B cell (primary cell): ENCODE measurements at regions of chr6 and their contacts with region 1.

Region 1: DNA sequence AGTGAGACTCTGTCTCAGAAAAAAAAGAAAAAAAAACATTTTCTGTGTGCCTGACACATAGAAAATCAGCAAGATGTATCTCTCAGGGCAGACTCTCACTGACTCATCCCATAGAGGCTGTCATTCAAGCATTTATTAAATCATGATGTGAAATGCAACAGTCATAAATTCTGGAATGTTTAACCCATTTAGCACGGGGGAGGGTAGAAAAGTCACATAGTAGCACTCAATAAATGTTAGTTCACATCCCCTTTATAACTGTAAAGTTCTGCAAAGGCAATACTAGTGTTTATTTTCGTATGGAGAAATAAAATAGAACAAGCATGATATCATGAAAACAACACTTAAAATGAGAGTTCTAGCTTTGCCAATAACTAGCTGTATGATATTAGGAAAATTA is 15.5 kb upstream of the CARMIL1 start:
- DNase-seq: no peak
- ATAC-seq: no peak
- H3K4me3 ChIP-seq: no peak overlapping the region
- H3K4me3 Mint-ChIP-seq: no peak overlapping the region
- H3K27ac ChIP-seq: no peak overlapping the region
- H3K27ac Mint-ChIP-seq: no peak overlapping the region
- H3K4me1 ChIP-seq: no peaks in the 10 kb centered on the region
- H3K4me1 Mint-ChIP-seq: peaks cover 2% of the 10 kb centered on the region
- H3K27me3 ChIP-seq: no peaks in the 10 kb centered on the region
- H3K27me3 Mint-ChIP-seq: peaks cover 3% of the 10 kb centered on the region
- CTCF ChIP-seq: no peak

Region 2: DNA sequence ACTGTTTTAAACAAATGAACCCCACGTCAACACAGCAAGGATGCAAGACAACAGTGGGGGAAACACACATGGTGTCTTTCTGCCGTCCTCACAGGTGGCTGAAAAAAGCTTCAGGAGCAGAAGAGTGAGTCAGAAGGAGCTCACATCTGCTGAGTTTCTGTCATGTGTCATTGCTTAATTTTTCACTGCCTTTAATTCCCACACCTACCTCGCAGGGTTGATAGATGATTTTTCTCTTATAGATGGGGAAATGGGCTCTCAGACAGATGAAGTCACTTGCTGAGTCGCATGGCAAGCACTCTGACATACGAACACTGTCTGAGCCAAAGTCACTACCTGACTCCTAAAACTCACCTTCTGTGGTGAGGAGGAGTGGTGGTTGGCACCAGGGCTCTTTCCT is 12.8 kb before region 1 on chr6:
- CTCF ChIA-PET with region 1: interaction called, 11 read pairs
- POLR2A ChIA-PET with region 1: no interaction called
- intact Hi-C with region 1: no loop called
- DNase-seq: no peak
- ATAC-seq: no peak
- H3K4me3 ChIP-seq: no peak overlapping the region
- H3K4me3 Mint-ChIP-seq: no peak overlapping the region
- H3K27ac ChIP-seq: no peak overlapping the region
- H3K27ac Mint-ChIP-seq: no peak overlapping the region
- H3K4me1 ChIP-seq: no peaks in the 10 kb centered on the region
- H3K4me1 Mint-ChIP-seq: no peaks in the 10 kb centered on the region
- H3K27me3 ChIP-seq: peaks cover 0 to 3% (median 1%) of the 10 kb centered on the region in 4 experiments
- H3K27me3 Mint-ChIP-seq: peaks cover 28% of the 10 kb centered on the region
- CTCF ChIP-seq: no peak

Region 3: DNA sequence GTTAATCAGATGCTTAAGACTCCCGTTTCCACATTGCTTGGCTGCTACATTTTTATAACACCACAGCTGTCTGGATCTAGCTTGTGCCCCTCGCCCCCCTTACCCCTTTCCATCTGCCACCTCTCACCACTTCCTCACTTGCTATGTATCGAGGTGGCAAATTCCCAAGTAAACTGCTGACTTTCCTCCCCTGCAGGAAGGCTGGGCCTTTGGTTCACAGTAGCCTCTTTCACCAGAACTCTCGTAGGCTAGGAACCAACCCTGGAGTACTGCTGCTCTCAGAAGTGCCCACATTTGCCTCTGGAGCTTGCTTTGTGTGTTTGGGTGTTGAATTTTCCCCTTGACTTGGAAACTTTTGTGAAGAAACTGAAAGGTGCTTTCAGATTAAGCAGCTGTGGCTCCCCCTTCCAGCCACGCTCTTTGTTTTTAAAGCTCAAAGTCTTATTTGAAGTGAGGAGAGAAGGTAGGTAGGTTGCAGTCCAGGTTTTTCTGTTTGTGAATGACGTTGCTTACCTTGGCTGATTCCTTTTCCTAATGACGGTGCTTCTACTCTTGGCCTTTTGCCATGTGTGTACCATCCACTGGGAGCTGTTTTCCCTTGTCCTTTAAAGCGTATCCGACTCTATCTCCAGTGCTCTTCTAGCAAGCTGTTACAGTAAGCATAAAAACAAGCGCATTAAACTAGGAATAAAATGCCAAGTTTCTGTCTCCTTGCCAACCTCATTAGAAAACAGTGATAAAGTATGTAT is 106.0 kb after region 1 on chr6:
- CTCF ChIA-PET with region 1: interaction called, 10 read pairs
- POLR2A ChIA-PET with region 1: no interaction called
- intact Hi-C with region 1: no loop called
- DNase-seq: no peak
- ATAC-seq: no peak
- H3K4me3 ChIP-seq: no peak overlapping the region
- H3K4me3 Mint-ChIP-seq: peak overlapping the region; percentile 42
- H3K27ac ChIP-seq: peak overlapping the region in 1 of 2 donors; percentile 22
- H3K27ac Mint-ChIP-seq: peak overlapping the region; percentile 43
- H3K4me1 ChIP-seq: peaks cover 19 to 30% of the 10 kb centered on the region in 2 donors
- H3K4me1 Mint-ChIP-seq: peaks cover 62% of the 10 kb centered on the region
- H3K27me3 ChIP-seq: no peaks in the 10 kb centered on the region
- H3K27me3 Mint-ChIP-seq: no peaks in the 10 kb centered on the region
- CTCF ChIP-seq: no peak

Region 4: DNA sequence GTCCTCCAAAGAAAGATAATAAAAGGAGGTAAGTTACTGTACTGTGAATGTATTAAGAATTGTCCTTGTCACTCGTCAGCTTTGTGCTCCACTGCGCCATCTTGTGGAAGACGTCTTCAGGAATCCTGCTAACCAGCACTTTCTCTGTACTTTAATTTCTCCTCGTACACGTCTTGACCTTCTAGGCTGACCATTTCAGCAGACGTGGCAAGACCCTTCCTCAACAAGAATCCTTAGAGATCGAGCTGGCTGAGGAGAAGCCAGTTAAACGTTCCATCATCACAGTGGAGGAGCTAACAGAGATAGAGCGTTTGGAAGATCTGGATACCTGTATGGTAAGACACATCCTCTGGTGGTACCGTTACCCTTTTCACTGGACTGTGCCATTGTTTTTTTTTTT is 292.9 kb after region 1 on chr6:
- CTCF ChIA-PET with region 1: interaction called, 93 read pairs
- POLR2A ChIA-PET with region 1: no interaction called
- intact Hi-C with region 1: loop called (anchors 1 kb)
- DNase-seq: peak; percentile 75
- ATAC-seq: no peak
- H3K4me3 ChIP-seq: no peak overlapping the region
- H3K4me3 Mint-ChIP-seq: no peak overlapping the region
- H3K27ac ChIP-seq: no peak overlapping the region
- H3K27ac Mint-ChIP-seq: no peak overlapping the region
- H3K4me1 ChIP-seq: peaks cover 4 to 9% of the 10 kb centered on the region in 2 donors
- H3K4me1 Mint-ChIP-seq: peaks cover 11% of the 10 kb centered on the region
- H3K27me3 ChIP-seq: no peaks in the 10 kb centered on the region
- H3K27me3 Mint-ChIP-seq: peaks cover 2% of the 10 kb centered on the region
- CTCF ChIP-seq: peak; percentile 95

Region 5: GRCh38 chr6:25942561-25943147 is 679.0 kb after region 1 on chr6:
- CTCF ChIA-PET with region 1: interaction called, 4 read pairs
- POLR2A ChIA-PET with region 1: no interaction called
- intact Hi-C with region 1: loop called (anchors 2 kb)
- DNase-seq: peak; percentile 65
- ATAC-seq: peak; percentile 47
- H3K4me3 ChIP-seq: no peak overlapping the region
- H3K4me3 Mint-ChIP-seq: no peak overlapping the region
- H3K27ac ChIP-seq: no peak overlapping the region
- H3K27ac Mint-ChIP-seq: no peak overlapping the region
- H3K4me1 ChIP-seq: no peaks in the 10 kb centered on the region
- H3K4me1 Mint-ChIP-seq: peaks cover 10% of the 10 kb centered on the region
- H3K27me3 ChIP-seq: no peaks in the 10 kb centered on the region
- H3K27me3 Mint-ChIP-seq: peaks cover 4% of the 10 kb centered on the region
- CTCF ChIP-seq: peak; percentile 70